ENCODE measurements at regions of chr19 and their contacts with region 1.

Region 1: DNA sequence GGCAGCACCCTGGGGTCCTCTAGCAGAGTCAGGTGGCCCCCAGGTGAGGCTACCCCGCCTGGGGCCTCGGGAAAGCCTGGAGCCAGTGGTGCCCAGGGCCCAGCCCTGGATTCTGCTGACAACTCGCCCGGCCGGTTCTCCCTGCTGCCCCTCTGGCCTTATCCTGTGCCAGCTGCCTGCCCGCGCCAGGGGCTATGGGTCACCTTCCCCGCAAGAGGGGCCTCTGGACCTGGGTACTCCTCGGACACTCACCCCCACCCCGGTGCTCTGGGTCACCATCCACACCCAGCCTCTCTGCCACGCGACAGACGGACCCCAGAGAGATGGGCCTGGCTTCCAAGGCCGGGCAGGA is 24.0 kb downstream of the ZBTB7A start:
- DNase-seq: peak; percentile 48 to 64 (median 64)
- ATAC-seq: peak; percentile 60
- H3K4me3 ChIP-seq: no peak overlapping the region
- H3K4me1 ChIP-seq: peaks cover 14% of the 10 kb centered on the region
- CTCF ChIP-seq: no peak

Region 2: DNA sequence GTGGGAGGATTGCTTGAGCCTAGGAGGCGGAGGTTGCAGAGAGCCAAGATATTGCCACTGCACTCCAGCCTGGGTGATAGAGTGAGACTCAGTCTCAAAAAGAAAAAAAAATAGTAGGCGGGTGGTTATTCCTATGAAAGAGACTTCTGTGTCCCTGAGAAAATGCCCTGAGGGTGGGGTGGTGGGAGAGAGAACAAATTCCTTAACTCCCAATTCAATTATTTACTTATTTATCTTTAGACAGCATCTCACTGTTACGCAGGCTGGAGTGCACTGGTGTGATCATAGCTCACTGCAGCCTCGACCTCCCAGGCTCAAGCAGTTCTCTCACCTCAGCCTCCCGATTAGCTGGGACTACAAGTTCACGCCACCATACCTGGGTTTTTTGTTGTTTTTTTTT is 47.1 kb before region 1 on chr19:
- intact Hi-C with region 1: loop called in 1 of 2 experiments (anchors 10 kb)
- DNase-seq: no peak
- ATAC-seq: no peak
- H3K4me3 ChIP-seq: no peak overlapping the region
- H3K4me1 ChIP-seq: no peaks in the 10 kb centered on the region
- CTCF ChIP-seq: no peak

Region 3: DNA sequence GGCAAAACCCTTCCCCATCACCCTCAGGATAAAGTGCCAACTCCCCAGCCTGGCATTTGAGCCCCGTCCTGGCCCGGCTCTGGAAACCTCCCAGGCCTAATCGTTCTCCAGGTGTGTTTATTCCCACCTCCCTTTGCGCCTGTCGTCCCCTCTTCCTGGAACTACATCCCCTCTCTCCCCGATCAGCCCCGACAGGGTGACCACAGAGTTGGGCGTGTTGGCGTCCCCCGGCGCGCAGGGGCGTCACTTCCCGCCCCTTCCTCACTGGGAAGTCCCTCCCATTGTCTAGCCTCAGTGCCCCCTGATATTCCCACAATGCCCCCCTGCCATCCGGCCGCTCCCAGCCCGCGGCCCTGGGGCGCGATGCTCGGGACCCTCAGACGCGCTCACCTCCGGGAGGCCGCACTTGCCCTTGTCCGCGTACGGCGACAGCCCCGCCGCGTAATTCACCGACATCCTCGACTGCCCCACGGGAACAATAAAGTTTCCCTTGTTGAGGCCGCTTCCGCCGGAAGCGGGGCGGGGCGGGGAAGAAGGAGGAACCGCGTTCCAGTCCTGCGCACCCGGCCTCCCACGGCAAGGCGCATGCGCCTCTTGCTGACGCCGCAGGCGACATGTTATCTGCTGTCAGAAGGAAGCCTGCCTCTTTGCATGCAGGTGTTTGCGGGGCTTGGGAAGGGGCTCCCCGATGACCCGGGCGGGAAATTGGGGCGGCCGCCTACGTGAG is 139.5 kb after region 1 on chr19 and contains the starts of genes ANKRD24 and SIRT6:
- intact Hi-C with region 1: no loop called
- DNase-seq: peak; percentile 96 to 98 (median 97)
- ATAC-seq: peak; percentile 88
- H3K4me3 ChIP-seq: peak within 1 kb of the TSS; percentile 79
- H3K4me1 ChIP-seq: peaks cover 23% of the 10 kb centered on the region
- CTCF ChIP-seq: no peak
- total RNA-seq, gene ANKRD24: 0.95 to 2.7 (median 1.3) TPM
- total RNA-seq, gene SIRT6: 60.9 to 138 (median 118) TPM

Measured in mucosa of descending colon (tissue), 3 donors.